PC-9 (cell line): ENCODE measurements at regions of chr1 and their contacts with region 1.

Region 1: GRCh38 chr1:66242646-66243547 is 291.1 kb upstream of the SGIP1 start:
- DNase-seq: peak; percentile 74 to 83
- H3K4me3 ChIP-seq: no peak overlapping the region
- H3K27ac ChIP-seq: no peak overlapping the region
- H3K4me1 ChIP-seq: no peaks in the 10 kb centered on the region
- H3K27me3 ChIP-seq: 0 out of 2 replicates have a peak, but pooled peaks cover 4% of the 10 kb centered on the region
- CTCF ChIP-seq: peak; percentile 95

Region 2: GRCh38 chr1:65059930-65060538 is 1182.9 kb before region 1 on chr1:
- CTCF ChIA-PET with region 1: no interaction called
- POLR2A ChIA-PET with region 1: no interaction called
- intact Hi-C with region 1: loop called (anchors 1 kb)
- DNase-seq: peak in 1 of 2 experiments; percentile 48
- H3K4me3 ChIP-seq: no peak overlapping the region
- H3K27ac ChIP-seq: no peak overlapping the region
- H3K4me1 ChIP-seq: no peaks in the 10 kb centered on the region
- H3K27me3 ChIP-seq: no peaks in the 10 kb centered on the region
- CTCF ChIP-seq: peak; percentile 78

Region 3: GRCh38 chr1:65235867-65236805 is 1006.8 kb before region 1 on chr1:
- CTCF ChIA-PET with region 1: no interaction called
- POLR2A ChIA-PET with region 1: no interaction called
- intact Hi-C with region 1: loop called (anchors 2 kb)
- DNase-seq: no peak
- H3K4me3 ChIP-seq: no peak overlapping the region
- H3K27ac ChIP-seq: no peak overlapping the region
- H3K4me1 ChIP-seq: no peaks in the 10 kb centered on the region
- H3K27me3 ChIP-seq: no peaks in the 10 kb centered on the region
- CTCF ChIP-seq: peak; percentile 87

Region 4: GRCh38 chr1:65717815-65718454 is 525.0 kb before region 1 on chr1:
- CTCF ChIA-PET with region 1: no interaction called
- POLR2A ChIA-PET with region 1: no interaction called
- intact Hi-C with region 1: loop called (anchors 10 kb)
- DNase-seq: no peak
- H3K4me3 ChIP-seq: no peak overlapping the region
- H3K27ac ChIP-seq: no peak overlapping the region
- H3K4me1 ChIP-seq: no peaks in the 10 kb centered on the region
- H3K27me3 ChIP-seq: no peaks in the 10 kb centered on the region
- CTCF ChIP-seq: 0 out of 2 replicates have a peak, but pooled peaks have one; percentile 20

Region 5: GRCh38 chr1:65958561-65959350 is 284.1 kb before region 1 on chr1:
- CTCF ChIA-PET with region 1: interaction called, 7 read pairs
- POLR2A ChIA-PET with region 1: no interaction called
- intact Hi-C with region 1: loop called (anchors 1 kb)
- DNase-seq: no peak
- H3K4me3 ChIP-seq: no peak overlapping the region
- H3K27ac ChIP-seq: no peak overlapping the region
- H3K4me1 ChIP-seq: no peaks in the 10 kb centered on the region
- H3K27me3 ChIP-seq: no peaks in the 10 kb centered on the region
- CTCF ChIP-seq: peak; percentile 85